Endothelial cell of umbilical vein (primary cell): ENCODE measurements at regions of chr13 and their contacts with region 1.

Region 1: GRCh38 chr13:113724780-113725315 is 34.2 kb upstream of the TMEM255B start:
- DNase-seq: peak; percentile 81
- H3K4me3 ChIP-seq: peak overlapping the region in 1 of 3 experiments; percentile 23
- H3K27ac ChIP-seq: no peak overlapping the region
- H3K4me1 ChIP-seq: no peaks in the 10 kb centered on the region
- H3K27me3 ChIP-seq: peaks cover 0 to 2% of the 10 kb centered on the region in 2 experiments
- CTCF ChIP-seq: peak; percentile 85 to 95
- POLR2A ChIP-seq: no peak

Region 2: DNA sequence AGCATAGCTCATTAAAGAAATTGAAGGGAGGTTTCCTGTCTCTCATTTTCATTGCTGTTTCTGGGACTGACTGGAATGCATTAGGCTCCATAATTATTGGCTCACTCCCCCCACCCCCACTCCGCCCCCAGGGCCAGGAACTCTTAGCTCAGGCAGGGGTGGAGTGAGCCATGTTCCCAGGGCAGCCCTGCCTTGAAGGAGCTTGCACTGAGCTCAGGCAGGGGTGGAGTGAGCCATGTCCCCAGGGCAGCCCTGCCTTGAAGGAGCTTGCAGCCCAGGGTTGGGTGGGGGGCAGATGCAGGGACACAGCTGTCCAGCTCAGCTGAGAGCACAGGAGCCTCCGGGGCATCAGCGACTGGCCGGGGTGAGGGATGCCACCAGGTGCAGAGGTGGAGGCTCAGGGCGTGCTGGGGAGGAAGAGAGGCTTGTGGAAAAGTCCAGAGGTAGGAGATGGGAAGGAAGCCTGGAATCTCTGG is 179.4 kb before region 1 on chr13:
- CTCF ChIA-PET with region 1: no interaction called
- POLR2A ChIA-PET with region 1: no interaction called
- dilution Hi-C with region 1: no loop called
- intact Hi-C with region 1: no loop called
- DNase-seq: peak; percentile 52
- H3K4me3 ChIP-seq: no peak overlapping the region
- H3K27ac ChIP-seq: peak overlapping the region; percentile 78
- H3K4me1 ChIP-seq: peaks cover 30% of the 10 kb centered on the region
- H3K27me3 ChIP-seq: no peaks in the 10 kb centered on the region
- CTCF ChIP-seq: no peak
- POLR2A ChIP-seq: no peak

Region 3: GRCh38 chr13:113666951-113667701 is 57.7 kb before region 1 on chr13 and contains the start of gene GRK1:
- CTCF ChIA-PET with region 1: interaction called, 10 read pairs
- POLR2A ChIA-PET with region 1: no interaction called
- dilution Hi-C with region 1: no loop called
- intact Hi-C with region 1: no loop called
- DNase-seq: no peak
- H3K4me3 ChIP-seq: no peak within 1 kb of the TSS
- H3K27ac ChIP-seq: no peak within 1 kb of the TSS
- H3K4me1 ChIP-seq: no peaks in the 10 kb centered on the region
- H3K27me3 ChIP-seq: peaks cover 0 to 2% of the 10 kb centered on the region in 2 experiments
- CTCF ChIP-seq: no peak
- POLR2A ChIP-seq: no peak
- total RNA-seq, gene GRK1: not detected in 2 replicates

Region 4: DNA sequence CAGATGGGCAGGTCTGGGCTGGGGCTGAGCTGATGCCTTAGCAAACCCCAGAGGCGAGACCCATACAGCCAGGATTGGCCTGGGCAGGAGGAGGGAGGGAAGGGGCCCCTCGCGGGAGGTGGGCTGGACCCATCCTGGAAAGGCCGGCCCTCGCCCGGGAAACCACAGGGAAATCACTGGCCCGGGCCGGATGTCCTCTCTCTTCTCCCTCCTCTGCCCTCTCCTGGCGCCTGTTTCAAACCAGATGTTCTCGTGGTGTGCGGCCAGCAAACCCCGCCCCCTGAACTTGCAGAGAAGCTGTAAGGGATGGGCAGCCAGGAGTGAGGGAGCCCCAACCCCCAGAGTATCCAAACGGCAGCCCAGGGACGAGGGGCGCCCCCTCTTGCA is 77.3 kb after region 1 on chr13:
- CTCF ChIA-PET with region 1: interaction called, 12 read pairs
- POLR2A ChIA-PET with region 1: no interaction called
- dilution Hi-C with region 1: no loop called
- intact Hi-C with region 1: no loop called
- DNase-seq: no peak
- H3K4me3 ChIP-seq: no peak overlapping the region
- H3K27ac ChIP-seq: no peak overlapping the region
- H3K4me1 ChIP-seq: peaks cover 3% of the 10 kb centered on the region
- H3K27me3 ChIP-seq: no peaks in the 10 kb centered on the region
- CTCF ChIP-seq: no peak
- POLR2A ChIP-seq: no peak

Region 5: GRCh38 chr13:113904411-113904810 is 179.6 kb after region 1 on chr13:
- CTCF ChIA-PET with region 1: interaction called, 15 read pairs
- POLR2A ChIA-PET with region 1: no interaction called
- dilution Hi-C with region 1: no loop called
- intact Hi-C with region 1: no loop called
- DNase-seq: peak; percentile 62
- H3K4me3 ChIP-seq: no peak overlapping the region
- H3K27ac ChIP-seq: no peak overlapping the region
- H3K4me1 ChIP-seq: no peaks in the 10 kb centered on the region
- H3K27me3 ChIP-seq: peaks cover 0 to 9% of the 10 kb centered on the region in 2 experiments
- CTCF ChIP-seq: peak; percentile 59 to 66
- POLR2A ChIP-seq: no peak

Region 6: GRCh38 chr13:113951246-113951999 is 226.6 kb after region 1 on chr13:
- CTCF ChIA-PET with region 1: interaction called, 18 read pairs
- POLR2A ChIA-PET with region 1: no interaction called
- dilution Hi-C with region 1: no loop called
- intact Hi-C with region 1: no loop called
- DNase-seq: peak; percentile 56
- H3K4me3 ChIP-seq: no peak overlapping the region
- H3K27ac ChIP-seq: no peak overlapping the region
- H3K4me1 ChIP-seq: no peaks in the 10 kb centered on the region
- H3K27me3 ChIP-seq: no peaks in the 10 kb centered on the region
- CTCF ChIP-seq: peak; percentile 79 to 90
- POLR2A ChIP-seq: no peak